ENCODE measurements at regions of chr7 and their contacts with region 1.

Region 1: GRCh38 chr7:129066290-129067131 is 11.6 kb upstream of the TNPO3 start:
- DNase-seq: peak; percentile 80 to 91 (median 83)
- ATAC-seq: peak; percentile 92
- H3K4me3 ChIP-seq: peak overlapping the region; percentile 6; the same call in 1 of the 2 replicates
- H3K27ac ChIP-seq: peak overlapping the region; percentile 97
- H3K4me1 ChIP-seq: peaks cover 18 to 32% of the 10 kb centered on the region in 2 experiments
- H3K27me3 ChIP-seq: no peaks in the 10 kb centered on the region; a peak in 1 of 5 replicates
- CTCF ChIP-seq: no peak; a peak in 1 of 6 replicates
- EP300 ChIP-seq: peak; percentile 79
- POLR2A ChIP-seq: peak; percentile 72
- RAD21 ChIP-seq: peak; percentile 10 to 26; a peak in 2 of 4 replicates

Region 2: GRCh38 chr7:127838816-127839415 is 1227.6 kb before region 1 on chr7:
- CTCF ChIA-PET with region 1: no interaction called
- POLR2A ChIA-PET with region 1: no interaction called
- in situ Hi-C with region 1: no loop called
- intact Hi-C with region 1: loop called (anchors 2 kb)
- DNase-seq: peak; percentile 57 to 94 (median 78)
- ATAC-seq: peak; percentile 98
- H3K4me3 ChIP-seq: no peak overlapping the region
- H3K27ac ChIP-seq: peak overlapping the region; percentile 55
- H3K4me1 ChIP-seq: peaks cover 0 to 24% of the 10 kb centered on the region in 2 experiments; a peak in 4 of 5 replicates
- H3K27me3 ChIP-seq: no peaks in the 10 kb centered on the region
- CTCF ChIP-seq: no peak
- EP300 ChIP-seq: peak; percentile 92
- POLR2A ChIP-seq: no peak
- RAD21 ChIP-seq: peak in 1 of 2 experiments; percentile 21; a peak in 2 of 4 replicates

Region 3: DNA sequence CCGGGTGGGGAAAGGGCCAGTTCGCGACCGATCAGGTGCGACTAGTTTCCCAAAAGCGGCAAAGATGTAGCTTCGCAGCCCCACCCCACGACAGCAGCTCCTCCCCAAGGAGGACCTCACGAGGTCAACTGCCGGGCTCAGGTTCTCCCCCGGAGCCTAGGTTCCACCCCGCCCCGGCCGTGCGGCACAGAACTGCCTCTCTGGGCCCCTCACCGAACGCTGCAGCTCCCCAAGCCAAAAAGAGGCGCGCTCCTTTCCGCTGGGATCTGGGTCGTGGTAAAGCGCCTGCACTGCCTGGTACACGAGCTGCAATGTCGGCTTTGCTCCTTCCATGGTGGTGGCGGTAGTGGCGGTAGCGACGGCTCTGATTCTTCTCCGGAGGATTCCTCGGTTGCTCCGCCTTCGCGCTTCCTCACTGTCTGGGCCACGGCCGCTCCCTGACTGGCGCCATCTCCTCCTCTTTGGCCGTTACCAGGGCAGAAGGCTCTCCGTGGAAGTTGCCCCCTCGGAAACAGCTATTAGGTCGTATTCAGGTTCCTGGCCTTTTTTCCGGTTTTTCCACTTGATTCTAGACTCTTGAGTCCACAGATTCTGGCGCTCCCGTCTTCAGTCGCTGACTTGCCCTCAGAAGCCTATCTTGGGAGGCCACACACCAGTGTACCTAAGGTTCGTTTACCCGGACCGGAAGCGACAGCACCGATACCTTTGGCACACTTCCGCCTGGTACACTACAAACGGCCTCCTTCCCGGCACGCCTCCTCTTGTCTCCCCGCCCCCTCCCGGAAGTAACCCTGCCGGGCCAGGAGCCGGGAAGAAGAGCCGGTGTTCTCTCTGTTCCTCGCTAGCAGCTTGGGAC is 11.8 kb before region 1 on chr7 and contains the start of gene TNPO3:
- CTCF ChIA-PET with region 1: no interaction called
- POLR2A ChIA-PET with region 1: interaction called, 149 read pairs
- in situ Hi-C with region 1: no loop called
- intact Hi-C with region 1: no loop called
- DNase-seq: peak; percentile 97 to 99 (median 98)
- ATAC-seq: peak; percentile 91
- H3K4me3 ChIP-seq: peak within 1 kb of the TSS; percentile 80
- H3K27ac ChIP-seq: peak within 1 kb of the TSS; percentile 99
- H3K4me1 ChIP-seq: peaks cover 18 to 21% of the 10 kb centered on the region in 2 experiments; a peak in 4 of 5 replicates
- H3K27me3 ChIP-seq: no peaks in the 10 kb centered on the region
- CTCF ChIP-seq: peak in 2 of 3 experiments; percentile 1 to 7; a peak in 2 of 6 replicates
- EP300 ChIP-seq: peak; percentile 70
- POLR2A ChIP-seq: peak; percentile 98
- RAD21 ChIP-seq: 0 out of 4 replicates have a peak, but pooled peaks of 1 of the 2 experiments have one; percentile 10
- polyA plus RNA-seq, gene TNPO3: 35.8 to 46.0 TPM

Region 4: DNA sequence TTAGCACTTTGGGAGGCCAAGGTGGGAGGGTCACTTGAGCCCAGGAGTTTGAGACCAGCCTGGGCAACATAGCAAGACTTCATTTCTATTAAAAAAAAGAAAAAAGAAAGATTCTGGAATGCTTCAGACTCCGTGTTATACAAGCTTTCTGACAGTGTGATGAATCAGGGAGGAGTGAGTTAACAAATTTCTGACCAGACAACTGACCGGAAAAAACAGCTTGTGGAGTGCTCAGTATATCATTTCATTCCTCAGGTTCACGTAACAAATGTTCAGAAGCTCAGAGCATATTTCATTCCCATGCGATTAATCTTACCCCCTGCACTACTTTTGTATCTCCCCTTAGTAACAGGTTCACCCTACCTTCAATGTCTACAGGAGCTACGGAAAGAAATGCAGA is 17.0 kb after region 1 on chr7:
- CTCF ChIA-PET with region 1: no interaction called
- POLR2A ChIA-PET with region 1: interaction called, 20 read pairs
- in situ Hi-C with region 1: no loop called
- intact Hi-C with region 1: no loop called
- DNase-seq: no peak
- ATAC-seq: 0 out of 3 replicates have a peak, but pooled peaks have one; percentile 18
- H3K4me3 ChIP-seq: no peak overlapping the region
- H3K27ac ChIP-seq: no peak overlapping the region
- H3K4me1 ChIP-seq: peaks cover 0 to 7% of the 10 kb centered on the region in 2 experiments; a peak in 4 of 5 replicates
- H3K27me3 ChIP-seq: no peaks in the 10 kb centered on the region
- CTCF ChIP-seq: no peak
- EP300 ChIP-seq: no peak
- POLR2A ChIP-seq: no peak
- RAD21 ChIP-seq: no peak

Region 5: GRCh38 chr7:129252128-129252527 is 185.6 kb after region 1 on chr7:
- CTCF ChIA-PET with region 1: no interaction called
- POLR2A ChIA-PET with region 1: no interaction called
- in situ Hi-C with region 1: no loop called
- intact Hi-C with region 1: no loop called
- DNase-seq: no peak
- ATAC-seq: no peak
- H3K4me3 ChIP-seq: no peak overlapping the region
- H3K27ac ChIP-seq: no peak overlapping the region
- H3K4me1 ChIP-seq: peaks cover 0 to 4% of the 10 kb centered on the region in 2 experiments; a peak in 1 of 5 replicates
- H3K27me3 ChIP-seq: no peaks in the 10 kb centered on the region
- CTCF ChIP-seq: no peak
- EP300 ChIP-seq: no peak
- POLR2A ChIP-seq: no peak
- RAD21 ChIP-seq: no peak

Measured in K562 (cell line).